ENCODE measurements at regions of chr10 and their contacts with region 1.

Region 1: DNA sequence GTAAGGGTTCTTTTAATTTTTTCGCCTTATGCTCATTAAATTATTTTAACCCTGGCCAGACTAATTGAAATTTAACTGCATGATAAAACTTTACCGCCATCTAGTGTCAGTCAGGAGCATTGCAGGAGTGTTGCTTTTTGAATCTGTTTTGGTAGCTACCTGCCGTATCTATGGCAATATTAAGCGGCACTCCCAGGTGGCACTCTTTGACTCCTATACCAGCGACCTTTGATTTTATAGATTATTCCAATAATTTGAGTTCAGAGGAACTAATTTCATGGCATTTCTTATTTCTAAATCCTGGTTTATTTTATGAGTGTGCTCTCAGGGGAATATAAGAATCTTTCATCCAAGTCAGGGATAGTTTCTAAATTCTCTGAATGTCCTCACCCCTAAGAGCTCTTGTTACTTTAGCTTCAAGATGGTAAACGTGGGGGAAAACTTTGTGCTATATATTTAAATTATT is 198.9 kb downstream of the REEP3 start:
- DNase-seq: peak in 8 of 9 donors; percentile 33 to 74 (median 63)
- ATAC-seq: peak; percentile 87
- H3K4me3 ChIP-seq: no peak overlapping the region
- H3K4me3 Mint-ChIP-seq: peak overlapping the region in 3 of 10 donors; percentile 8 to 63 (median 16)
- H3K27ac ChIP-seq: no peak overlapping the region
- H3K27ac Mint-ChIP-seq: peak overlapping the region in 5 of 9 donors; percentile 1 to 71 (median 68)
- H3K4me1 ChIP-seq: no peaks in the 10 kb centered on the region
- H3K4me1 Mint-ChIP-seq: peaks cover 0 to 22% (median 7%) of the 10 kb centered on the region in 7 donors
- H3K27me3 ChIP-seq: no peaks in the 10 kb centered on the region
- H3K27me3 Mint-ChIP-seq: peaks cover 2 to 11% (median 3%) of the 10 kb centered on the region in 5 donors

Region 2: GRCh38 chr10:62437696-62438095 is 1282.4 kb before region 1 on chr10:
- CTCF ChIA-PET with region 1: interaction called, 3 read pairs
- POLR2A ChIA-PET with region 1: no interaction called
- intact Hi-C with region 1: loop called (anchors 1 to 10 kb)
- DNase-seq: peak in 7 of 9 donors; percentile 42 to 71 (median 65)
- ATAC-seq: peak; percentile 79
- H3K4me3 ChIP-seq: no peak overlapping the region
- H3K4me3 Mint-ChIP-seq: no peak overlapping the region
- H3K27ac ChIP-seq: no peak overlapping the region
- H3K27ac Mint-ChIP-seq: no peak overlapping the region
- H3K4me1 ChIP-seq: no peaks in the 10 kb centered on the region
- H3K4me1 Mint-ChIP-seq: peaks cover 0 to 12% (median 3%) of the 10 kb centered on the region in 7 donors
- H3K27me3 ChIP-seq: no peaks in the 10 kb centered on the region
- H3K27me3 Mint-ChIP-seq: peaks cover 0 to 24% (median 4%) of the 10 kb centered on the region in 5 donors

Region 3: GRCh38 chr10:62492012-62492869 is 1227.9 kb before region 1 on chr10:
- CTCF ChIA-PET with region 1: no interaction called
- POLR2A ChIA-PET with region 1: no interaction called
- intact Hi-C with region 1: loop called in 1 of 2 experiments (anchors 2 kb)
- DNase-seq: peak in 7 of 9 donors; percentile 14 to 53 (median 40)
- ATAC-seq: peak; percentile 54
- H3K4me3 ChIP-seq: no peak overlapping the region
- H3K4me3 Mint-ChIP-seq: no peak overlapping the region
- H3K27ac ChIP-seq: no peak overlapping the region
- H3K27ac Mint-ChIP-seq: no peak overlapping the region
- H3K4me1 ChIP-seq: no peaks in the 10 kb centered on the region
- H3K4me1 Mint-ChIP-seq: peaks cover 0 to 2% (median 0%) of the 10 kb centered on the region in 7 donors
- H3K27me3 ChIP-seq: no peaks in the 10 kb centered on the region
- H3K27me3 Mint-ChIP-seq: peaks cover 0 to 29% (median 4%) of the 10 kb centered on the region in 5 donors

Region 4: GRCh38 chr10:62594093-62594520 is 1126.0 kb before region 1 on chr10:
- CTCF ChIA-PET with region 1: no interaction called
- POLR2A ChIA-PET with region 1: no interaction called
- intact Hi-C with region 1: loop called (anchors 5 to 10 kb)
- DNase-seq: peak in 8 of 9 donors; percentile 22 to 58 (median 40)
- ATAC-seq: peak; percentile 84
- H3K4me3 ChIP-seq: no peak overlapping the region
- H3K4me3 Mint-ChIP-seq: no peak overlapping the region
- H3K27ac ChIP-seq: no peak overlapping the region
- H3K27ac Mint-ChIP-seq: no peak overlapping the region
- H3K4me1 ChIP-seq: no peaks in the 10 kb centered on the region
- H3K4me1 Mint-ChIP-seq: peaks cover 0 to 4% (median 0%) of the 10 kb centered on the region in 7 donors
- H3K27me3 ChIP-seq: no peaks in the 10 kb centered on the region
- H3K27me3 Mint-ChIP-seq: peaks cover 0 to 26% (median 10%) of the 10 kb centered on the region in 5 donors

Region 5: GRCh38 chr10:62707810-62708209 is 1012.3 kb before region 1 on chr10:
- CTCF ChIA-PET with region 1: no interaction called
- POLR2A ChIA-PET with region 1: no interaction called
- intact Hi-C with region 1: no loop called
- DNase-seq: no peak
- ATAC-seq: no peak
- H3K4me3 ChIP-seq: no peak overlapping the region
- H3K4me3 Mint-ChIP-seq: no peak overlapping the region
- H3K27ac ChIP-seq: no peak overlapping the region
- H3K27ac Mint-ChIP-seq: no peak overlapping the region
- H3K4me1 ChIP-seq: no peaks in the 10 kb centered on the region
- H3K4me1 Mint-ChIP-seq: peaks cover 0 to 6% (median 0%) of the 10 kb centered on the region in 7 donors
- H3K27me3 ChIP-seq: no peaks in the 10 kb centered on the region
- H3K27me3 Mint-ChIP-seq: peaks cover 0 to 14% (median 4%) of the 10 kb centered on the region in 5 donors

Region 6: DNA sequence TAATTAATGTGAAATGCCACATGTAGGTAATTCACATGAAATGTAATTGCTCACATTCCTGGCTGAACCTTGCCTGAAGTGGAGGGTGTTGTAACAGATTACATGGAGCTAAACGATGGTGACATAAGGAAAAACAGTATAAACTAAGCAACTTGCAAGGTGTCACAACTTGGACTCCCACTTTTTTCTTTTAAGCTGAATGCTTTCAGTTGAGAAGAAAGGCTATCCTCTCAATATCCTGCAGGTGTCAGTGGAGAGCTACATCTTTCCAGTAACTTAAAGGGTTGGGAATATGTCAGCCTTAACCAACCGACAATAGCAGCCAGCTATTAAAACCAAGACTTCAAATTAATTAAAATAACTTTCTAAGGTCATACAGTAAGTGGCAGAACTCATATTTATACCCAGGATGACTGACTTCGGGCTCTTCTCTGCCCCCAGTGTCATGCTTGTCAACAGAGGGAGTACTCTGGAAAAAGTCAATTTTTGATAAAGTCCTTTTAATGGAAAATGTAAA is 553.3 kb before region 1 on chr10:
- CTCF ChIA-PET with region 1: interaction called, 202 read pairs
- POLR2A ChIA-PET with region 1: interaction called, 4 read pairs
- intact Hi-C with region 1: loop called (anchors 1 kb)
- DNase-seq: peak in 7 of 9 donors; percentile 36 to 65 (median 55)
- ATAC-seq: peak; percentile 79
- H3K4me3 ChIP-seq: no peak overlapping the region
- H3K4me3 Mint-ChIP-seq: no peak overlapping the region
- H3K27ac ChIP-seq: no peak overlapping the region
- H3K27ac Mint-ChIP-seq: peak overlapping the region in 6 of 9 donors; percentile 24 to 59 (median 46)
- H3K4me1 ChIP-seq: no peaks in the 10 kb centered on the region
- H3K4me1 Mint-ChIP-seq: peaks cover under 1 to 42% (median 2%) of the 10 kb centered on the region in 7 donors
- H3K27me3 ChIP-seq: no peaks in the 10 kb centered on the region
- H3K27me3 Mint-ChIP-seq: no peaks in the 10 kb centered on the region

Region 7: DNA sequence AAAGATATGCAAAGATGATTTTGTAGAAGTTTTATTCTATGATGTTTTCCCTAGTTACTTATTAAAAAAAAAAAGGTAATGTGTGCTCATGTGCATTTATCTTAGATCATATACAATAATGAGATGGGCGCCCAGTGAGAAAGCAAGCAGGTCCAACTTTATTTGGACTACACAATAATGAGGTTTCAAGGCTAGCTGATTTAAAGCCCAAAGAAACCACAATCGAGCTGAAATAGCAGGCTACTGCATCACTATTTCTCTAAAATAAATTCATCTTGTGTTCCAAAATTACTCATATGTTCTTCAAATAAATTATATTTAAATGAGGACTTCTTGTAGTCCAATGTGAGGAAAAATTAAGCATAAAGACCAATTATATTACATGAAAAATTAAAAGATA is 364.4 kb before region 1 on chr10:
- CTCF ChIA-PET with region 1: no interaction called
- POLR2A ChIA-PET with region 1: no interaction called
- intact Hi-C with region 1: no loop called
- DNase-seq: no peak
- ATAC-seq: no peak
- H3K4me3 ChIP-seq: no peak overlapping the region
- H3K4me3 Mint-ChIP-seq: no peak overlapping the region
- H3K27ac ChIP-seq: no peak overlapping the region
- H3K27ac Mint-ChIP-seq: no peak overlapping the region
- H3K4me1 ChIP-seq: no peaks in the 10 kb centered on the region
- H3K4me1 Mint-ChIP-seq: peaks cover 7 to 27% (median 18%) of the 10 kb centered on the region in 7 donors
- H3K27me3 ChIP-seq: no peaks in the 10 kb centered on the region
- H3K27me3 Mint-ChIP-seq: no peaks in the 10 kb centered on the region

Region 8: DNA sequence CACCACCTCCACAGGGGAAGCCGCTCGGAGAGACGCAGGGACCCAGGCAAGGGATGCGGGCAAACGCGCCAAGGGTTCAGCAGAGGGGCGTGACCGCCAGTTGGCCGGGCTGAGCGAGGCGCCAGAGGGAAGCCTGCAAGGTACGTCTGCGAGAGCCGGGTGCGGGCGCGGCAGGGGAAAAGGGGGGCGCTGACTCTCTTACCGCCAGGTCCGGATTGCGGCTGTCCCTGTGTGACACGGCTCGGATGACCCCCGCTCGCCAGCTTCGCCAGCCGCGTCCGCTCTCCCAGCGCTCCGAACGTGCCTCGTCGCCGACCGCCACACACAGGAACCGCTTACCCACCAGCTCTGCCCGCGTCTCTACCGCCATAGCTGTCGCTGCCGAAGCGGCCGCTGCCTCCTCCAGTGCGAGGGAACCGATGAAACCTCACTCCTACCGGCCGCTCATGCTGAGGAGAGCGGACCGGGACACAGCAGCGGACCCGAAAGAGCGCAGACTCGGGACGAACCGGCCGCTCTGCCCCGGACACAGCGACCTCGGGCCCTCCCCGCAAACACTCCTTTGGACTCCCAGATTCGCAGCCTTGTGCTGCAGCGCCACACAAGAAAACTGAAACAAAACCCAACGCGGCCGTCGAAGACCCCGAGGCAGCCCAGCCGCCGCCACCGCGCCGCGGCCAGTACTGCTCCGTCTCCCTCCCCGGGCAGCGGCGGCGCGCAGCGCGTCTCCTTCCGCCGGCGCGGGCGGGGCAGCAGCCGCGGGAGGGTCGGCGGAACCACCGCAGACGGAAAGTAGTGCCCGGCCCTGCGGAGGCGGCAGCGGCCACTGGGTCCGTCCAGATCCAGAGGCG is 254.6 kb before region 1 on chr10 and contains the start of gene JMJD1C:
- CTCF ChIA-PET with region 1: no interaction called
- POLR2A ChIA-PET with region 1: no interaction called
- intact Hi-C with region 1: loop called (anchors 1 to 5 kb)
- DNase-seq: peak; percentile 49 to 72 (median 63)
- ATAC-seq: peak; percentile 85
- H3K4me3 ChIP-seq: peak within 1 kb of the TSS; percentile 89
- H3K4me3 Mint-ChIP-seq: peak within 1 kb of the TSS; percentile 88 to 98 (median 95)
- H3K27ac ChIP-seq: peak within 1 kb of the TSS; percentile 86
- H3K27ac Mint-ChIP-seq: peak within 1 kb of the TSS; percentile 68 to 97 (median 94)
- H3K4me1 ChIP-seq: peaks cover 0 to 16% of the 10 kb centered on the region in 2 donors
- H3K4me1 Mint-ChIP-seq: peaks cover 14 to 68% (median 34%) of the 10 kb centered on the region in 7 donors
- H3K27me3 ChIP-seq: no peaks in the 10 kb centered on the region
- H3K27me3 Mint-ChIP-seq: peaks cover 0 to 31% (median 0%) of the 10 kb centered on the region in 5 donors
- total RNA-seq, gene JMJD1C: 67.6 to 331 (median 137) TPM

Region 9: GRCh38 chr10:63629363-63630084 is 90.6 kb before region 1 on chr10:
- CTCF ChIA-PET with region 1: interaction called, 24 read pairs
- POLR2A ChIA-PET with region 1: no interaction called
- intact Hi-C with region 1: loop called (anchors 1 kb)
- DNase-seq: peak; percentile 61 to 81 (median 78)
- ATAC-seq: peak; percentile 81
- H3K4me3 ChIP-seq: peak overlapping the region; percentile 90
- H3K4me3 Mint-ChIP-seq: peak overlapping the region; percentile 87 to 98 (median 95)
- H3K27ac ChIP-seq: peak overlapping the region; percentile 69
- H3K27ac Mint-ChIP-seq: peak overlapping the region; percentile 79 to 95 (median 90)
- H3K4me1 ChIP-seq: peaks cover 0 to 17% of the 10 kb centered on the region in 2 donors
- H3K4me1 Mint-ChIP-seq: peaks cover 19 to 40% (median 26%) of the 10 kb centered on the region in 7 donors
- H3K27me3 ChIP-seq: no peaks in the 10 kb centered on the region
- H3K27me3 Mint-ChIP-seq: peaks cover 0 to 3% (median 0%) of the 10 kb centered on the region in 5 donors